Endothelial cell of umbilical vein (primary cell): ENCODE measurements at regions of chr2 and their contacts with region 1.

Region 1: GRCh38 chr2:187499941-187500532 is 52.0 kb upstream of the CALCRL start:
- DNase-seq: peak; percentile 75
- H3K4me3 ChIP-seq: no peak overlapping the region
- H3K27ac ChIP-seq: peak overlapping the region; percentile 19
- H3K4me1 ChIP-seq: peaks cover 50% of the 10 kb centered on the region
- H3K27me3 ChIP-seq: no peaks in the 10 kb centered on the region
- CTCF ChIP-seq: peak; percentile 48 to 58
- POLR2A ChIP-seq: no peak

Region 2: DNA sequence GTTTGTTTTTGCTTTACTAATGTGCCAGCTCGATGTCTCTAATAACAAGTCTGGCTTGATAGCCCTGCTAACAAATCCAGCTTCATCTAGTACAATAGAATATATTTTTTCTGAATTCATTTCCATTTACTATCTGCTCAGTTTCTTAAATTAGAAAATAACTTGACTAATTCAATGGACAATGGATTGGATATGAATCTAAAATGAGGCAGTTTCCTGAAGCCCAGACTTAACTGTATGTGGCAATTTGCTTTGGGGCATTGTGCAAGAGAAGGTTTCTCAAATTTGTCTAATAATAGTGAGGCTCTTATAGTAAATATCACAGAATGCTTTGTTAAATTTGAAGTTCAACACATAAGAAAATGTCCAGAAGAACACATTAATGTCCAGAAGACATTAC is 77.8 kb before region 1 on chr2:
- CTCF ChIA-PET with region 1: no interaction called
- POLR2A ChIA-PET with region 1: no interaction called
- dilution Hi-C with region 1: no loop called
- intact Hi-C with region 1: no loop called
- DNase-seq: peak; percentile 71
- H3K4me3 ChIP-seq: no peak overlapping the region
- H3K27ac ChIP-seq: peak overlapping the region; percentile 70
- H3K4me1 ChIP-seq: peaks cover 64% of the 10 kb centered on the region
- H3K27me3 ChIP-seq: no peaks in the 10 kb centered on the region
- CTCF ChIP-seq: no peak
- POLR2A ChIP-seq: no peak

Region 3: DNA sequence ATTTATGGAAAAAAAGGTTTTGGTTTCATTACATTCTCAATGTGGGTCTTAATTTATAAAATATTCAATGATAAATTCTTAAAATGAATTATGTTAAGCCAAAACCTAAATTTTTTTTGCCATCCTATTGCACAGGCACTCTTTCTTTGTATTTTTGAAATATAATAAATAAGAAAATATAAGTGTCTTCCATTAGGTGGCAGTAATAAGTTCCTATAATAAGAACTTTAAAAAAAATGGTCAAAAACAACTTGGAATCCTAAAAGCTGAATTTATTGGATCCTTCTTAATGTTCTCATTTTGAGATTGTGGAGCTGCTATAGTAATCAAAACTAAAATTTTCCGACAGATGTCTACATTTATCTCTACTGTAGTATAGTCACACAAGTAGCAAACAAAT is 57.7 kb before region 1 on chr2:
- CTCF ChIA-PET with region 1: no interaction called
- POLR2A ChIA-PET with region 1: no interaction called
- dilution Hi-C with region 1: no loop called
- intact Hi-C with region 1: no loop called
- DNase-seq: no peak
- H3K4me3 ChIP-seq: peak overlapping the region in 2 of 3 experiments; percentile 60 to 100
- H3K27ac ChIP-seq: peak overlapping the region; percentile 88
- H3K4me1 ChIP-seq: peaks cover 68% of the 10 kb centered on the region
- H3K27me3 ChIP-seq: no peaks in the 10 kb centered on the region
- CTCF ChIP-seq: no peak
- POLR2A ChIP-seq: no peak

Region 4: DNA sequence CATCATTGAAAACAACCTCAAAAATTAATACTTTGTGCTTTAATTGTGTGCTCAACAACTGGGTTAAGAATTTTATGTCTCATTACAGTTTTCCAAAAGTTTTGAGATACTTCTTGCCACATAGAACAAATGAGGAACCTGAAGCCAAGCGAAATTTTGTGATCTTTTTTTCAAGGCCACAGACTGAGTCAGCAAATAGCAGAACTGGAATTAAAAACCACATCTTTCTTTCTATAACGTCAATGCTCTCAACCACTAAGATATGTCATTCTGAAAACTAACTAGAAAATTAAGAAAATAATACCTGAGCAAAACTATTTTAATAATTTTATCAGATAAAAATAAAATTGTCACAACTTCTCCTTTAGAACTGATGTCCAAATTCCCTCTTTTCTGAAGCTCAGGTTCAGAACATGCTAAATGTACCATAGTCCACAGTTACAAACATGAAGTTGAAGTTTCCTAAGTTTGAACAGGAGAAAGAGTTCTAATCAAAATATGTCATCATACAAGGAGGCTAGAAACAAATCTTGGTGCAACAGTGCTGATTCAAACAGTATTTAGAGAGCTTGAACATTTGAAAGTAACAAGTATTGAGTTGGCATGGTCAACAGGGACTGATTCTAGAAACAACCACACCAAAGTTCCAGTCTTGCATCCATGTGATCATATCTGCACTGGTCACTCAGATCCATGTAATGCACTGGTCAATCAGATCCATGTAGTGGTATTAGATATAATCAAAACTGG is 24.4 kb before region 1 on chr2:
- CTCF ChIA-PET with region 1: interaction called, 6 read pairs
- POLR2A ChIA-PET with region 1: no interaction called
- dilution Hi-C with region 1: no loop called
- intact Hi-C with region 1: loop called (anchors 1 kb)
- DNase-seq: no peak
- H3K4me3 ChIP-seq: no peak overlapping the region
- H3K27ac ChIP-seq: no peak overlapping the region
- H3K4me1 ChIP-seq: no peaks in the 10 kb centered on the region
- H3K27me3 ChIP-seq: no peaks in the 10 kb centered on the region
- CTCF ChIP-seq: no peak
- POLR2A ChIP-seq: no peak

Region 5: GRCh38 chr2:187527262-187527661 is 27.2 kb after region 1 on chr2:
- CTCF ChIA-PET with region 1: interaction called, 12 read pairs
- POLR2A ChIA-PET with region 1: no interaction called
- dilution Hi-C with region 1: no loop called
- intact Hi-C with region 1: no loop called
- DNase-seq: peak; percentile 89
- H3K4me3 ChIP-seq: no peak overlapping the region
- H3K27ac ChIP-seq: peak overlapping the region; percentile 45
- H3K4me1 ChIP-seq: peaks cover 51% of the 10 kb centered on the region
- H3K27me3 ChIP-seq: no peaks in the 10 kb centered on the region
- CTCF ChIP-seq: no peak
- POLR2A ChIP-seq: peak; percentile 31

Region 6: GRCh38 chr2:187547353-187547979 is 47.4 kb after region 1 on chr2:
- CTCF ChIA-PET with region 1: interaction called, 71 read pairs
- POLR2A ChIA-PET with region 1: interaction called, 6 read pairs
- dilution Hi-C with region 1: no loop called
- intact Hi-C with region 1: no loop called
- DNase-seq: peak; percentile 91
- H3K4me3 ChIP-seq: peak overlapping the region in 1 of 3 experiments; percentile 22
- H3K27ac ChIP-seq: peak overlapping the region; percentile 61
- H3K4me1 ChIP-seq: peaks cover 91% of the 10 kb centered on the region
- H3K27me3 ChIP-seq: no peaks in the 10 kb centered on the region
- CTCF ChIP-seq: no peak
- POLR2A ChIP-seq: peak; percentile 70

Region 7: DNA sequence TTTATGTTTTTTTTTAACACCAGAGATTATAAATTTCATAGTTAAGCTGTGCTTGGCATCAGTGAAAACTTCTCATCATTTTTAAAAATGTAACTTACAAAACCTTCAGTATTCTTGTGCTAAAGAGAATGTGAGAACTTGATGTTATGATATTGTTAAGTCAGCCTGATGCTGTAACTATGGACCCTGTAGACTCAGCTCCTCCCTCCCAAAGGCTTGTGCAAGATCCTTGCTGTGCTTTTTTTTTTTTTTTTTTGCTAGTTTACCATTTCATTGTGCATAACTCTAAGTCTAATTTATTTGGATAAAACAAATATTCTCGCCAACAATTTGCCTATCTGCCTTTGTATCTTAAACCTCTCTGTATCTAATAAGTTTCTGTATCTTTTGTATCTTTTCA is 67.1 kb after region 1 on chr2:
- CTCF ChIA-PET with region 1: interaction called, 598 read pairs
- POLR2A ChIA-PET with region 1: no interaction called
- dilution Hi-C with region 1: no loop called
- intact Hi-C with region 1: no loop called
- DNase-seq: peak; percentile 40
- H3K4me3 ChIP-seq: no peak overlapping the region
- H3K27ac ChIP-seq: no peak overlapping the region
- H3K4me1 ChIP-seq: peaks cover 30% of the 10 kb centered on the region
- H3K27me3 ChIP-seq: no peaks in the 10 kb centered on the region
- CTCF ChIP-seq: no peak
- POLR2A ChIP-seq: no peak

Region 8: DNA sequence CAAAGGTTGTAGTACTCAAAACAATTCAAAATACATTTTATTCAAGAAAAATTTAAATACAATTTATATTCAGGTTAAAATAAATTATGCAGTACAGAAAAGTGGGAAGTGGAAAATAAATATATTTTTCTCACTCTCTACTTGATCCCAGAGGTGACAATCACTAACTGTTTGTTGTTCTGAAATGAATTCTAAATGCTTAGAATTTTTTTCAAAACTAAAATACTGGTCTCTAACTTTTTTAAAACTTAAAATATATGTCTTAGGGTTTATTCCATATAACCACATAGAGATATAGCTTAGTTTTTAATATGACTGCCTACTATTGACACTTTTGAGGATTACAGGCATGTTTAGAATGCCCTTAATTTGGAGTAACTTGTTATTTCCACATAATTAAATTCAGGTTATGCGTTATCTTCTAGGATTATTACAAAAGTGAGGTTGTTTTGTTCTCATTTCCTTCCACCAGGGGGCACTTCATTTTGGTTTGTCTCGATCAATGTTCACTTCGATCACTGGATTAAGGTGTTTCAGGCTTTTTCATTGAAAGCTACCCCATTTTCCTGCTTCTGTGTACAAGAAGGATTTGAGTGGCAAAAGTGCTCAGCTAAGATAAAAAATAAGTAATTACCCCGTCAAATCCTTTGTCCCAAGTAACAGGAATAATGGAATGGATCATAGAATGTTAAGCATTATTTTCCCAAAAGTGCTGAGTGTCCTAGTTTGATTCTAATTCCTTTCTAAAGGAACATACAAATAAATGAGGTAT is 81.3 kb after region 1 on chr2:
- CTCF ChIA-PET with region 1: interaction called, 598 read pairs
- POLR2A ChIA-PET with region 1: interaction called, 4 read pairs
- dilution Hi-C with region 1: no loop called
- intact Hi-C with region 1: loop called (anchors 1 kb)
- DNase-seq: peak; percentile 67
- H3K4me3 ChIP-seq: peak overlapping the region in 1 of 3 experiments; percentile 34
- H3K27ac ChIP-seq: peak overlapping the region; percentile 78
- H3K4me1 ChIP-seq: peaks cover 23% of the 10 kb centered on the region
- H3K27me3 ChIP-seq: no peaks in the 10 kb centered on the region
- CTCF ChIP-seq: peak; percentile 45 to 46
- POLR2A ChIP-seq: no peak

Region 9: DNA sequence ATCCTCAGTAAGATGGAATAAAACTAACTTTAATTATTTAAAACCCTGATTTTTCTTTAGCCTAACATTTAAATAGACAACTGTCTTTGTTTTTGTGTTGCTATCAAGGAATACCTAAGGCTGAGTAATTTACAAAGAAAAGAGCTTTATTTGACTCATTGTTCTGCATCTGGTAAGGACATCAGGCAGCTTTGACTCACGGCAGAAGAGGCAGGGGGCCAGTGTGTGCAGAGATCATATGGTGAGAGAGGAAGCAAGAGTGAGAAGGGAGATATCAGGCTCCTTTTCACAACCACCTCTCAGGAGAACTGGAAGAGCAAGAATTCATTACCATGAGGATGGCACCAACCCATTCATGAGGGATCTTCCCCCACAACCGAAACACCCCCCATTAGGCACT is 118.8 kb after region 1 on chr2:
- CTCF ChIA-PET with region 1: no interaction called
- POLR2A ChIA-PET with region 1: no interaction called
- dilution Hi-C with region 1: no loop called
- intact Hi-C with region 1: no loop called
- DNase-seq: no peak
- H3K4me3 ChIP-seq: no peak overlapping the region
- H3K27ac ChIP-seq: no peak overlapping the region
- H3K4me1 ChIP-seq: no peaks in the 10 kb centered on the region
- H3K27me3 ChIP-seq: no peaks in the 10 kb centered on the region
- CTCF ChIP-seq: no peak
- POLR2A ChIP-seq: no peak

Region 10: GRCh38 chr2:187842978-187843847 is 343.2 kb after region 1 on chr2:
- CTCF ChIA-PET with region 1: interaction called, 82 read pairs
- POLR2A ChIA-PET with region 1: interaction called, 4 read pairs
- dilution Hi-C with region 1: no loop called
- intact Hi-C with region 1: loop called (anchors 1 kb)
- DNase-seq: peak; percentile 75
- H3K4me3 ChIP-seq: no peak overlapping the region
- H3K27ac ChIP-seq: no peak overlapping the region
- H3K4me1 ChIP-seq: no peaks in the 10 kb centered on the region
- H3K27me3 ChIP-seq: no peaks in the 10 kb centered on the region
- CTCF ChIP-seq: peak; percentile 39 to 43
- POLR2A ChIP-seq: no peak